PC-3 (cell line): ENCODE measurements at regions of chr1 and their contacts with region 1.

Region 1: DNA sequence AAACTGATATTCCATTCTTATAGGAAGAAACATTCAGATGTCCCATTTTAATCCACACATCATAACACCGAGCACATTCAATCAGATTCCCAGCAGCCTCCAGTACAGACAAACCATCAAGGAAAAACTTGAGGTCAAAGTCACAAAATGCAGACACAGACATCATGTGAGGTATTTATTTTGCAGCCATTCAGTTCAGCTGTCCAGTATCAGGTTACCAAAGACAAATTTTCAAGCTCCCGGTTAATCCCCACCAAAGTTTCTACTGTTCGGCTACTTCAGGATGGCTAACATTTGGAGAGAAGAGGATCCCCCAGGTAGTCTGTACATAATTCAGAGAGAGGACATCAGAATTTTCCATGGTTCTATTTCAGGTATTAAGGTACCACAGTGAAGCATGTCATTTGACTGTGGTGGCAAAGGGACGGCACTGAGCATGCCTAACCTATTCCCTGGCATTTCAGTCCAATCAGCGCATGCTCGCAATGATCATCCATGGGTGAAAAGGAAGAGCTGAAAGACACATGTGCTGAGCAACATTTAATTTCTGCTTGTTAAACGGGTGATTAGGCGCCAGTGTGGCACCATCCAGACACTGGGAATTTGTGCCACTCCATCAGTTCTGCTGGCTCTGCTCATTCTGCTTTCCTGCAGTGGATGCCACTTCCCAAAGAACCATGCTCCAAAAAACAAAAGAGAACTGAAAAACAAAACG is 13.6 kb upstream of the NDC1 start:
- DNase-seq: no peak
- ATAC-seq: no peak
- H3K4me3 ChIP-seq: no peak overlapping the region
- H3K27ac ChIP-seq: no peak overlapping the region
- H3K4me1 ChIP-seq: no peaks in the 10 kb centered on the region
- H3K27me3 ChIP-seq: no peaks in the 10 kb centered on the region
- CTCF ChIP-seq: no peak

Region 2: DNA sequence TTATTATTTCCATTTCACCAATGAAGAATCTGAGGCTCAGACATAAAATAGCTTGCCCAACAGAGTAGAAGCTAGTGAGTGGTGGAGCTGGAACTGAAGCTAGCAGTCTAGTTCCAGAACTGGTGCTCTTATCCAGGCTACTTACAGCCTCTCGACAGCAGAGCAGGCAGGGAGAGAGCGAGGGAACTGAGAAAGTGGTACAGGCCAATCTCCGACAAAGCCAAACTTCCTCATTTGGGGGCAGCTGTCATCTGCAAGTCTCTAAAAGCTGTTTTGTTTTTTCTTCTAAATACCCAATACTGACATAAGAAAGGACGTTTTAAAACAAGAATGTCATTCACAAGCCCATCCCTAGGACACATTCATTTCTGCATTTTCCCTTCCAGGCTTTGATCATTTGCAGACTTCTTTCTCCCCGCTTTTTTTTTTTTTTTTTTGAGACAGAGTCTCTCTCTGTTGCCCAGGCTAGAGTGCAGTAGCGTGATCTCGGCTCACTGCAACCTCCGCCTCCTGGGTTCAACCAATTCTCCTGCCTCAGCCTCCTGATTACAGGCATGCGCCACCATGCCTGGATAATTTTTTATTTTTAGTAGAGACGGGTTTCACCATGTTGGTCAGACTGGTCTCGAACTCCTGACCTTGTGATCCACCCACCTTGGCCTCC is 17.9 kb after region 1 on chr1:
- CTCF ChIA-PET with region 1: interaction called, 12 read pairs
- POLR2A ChIA-PET with region 1: interaction called, 5 read pairs
- intact Hi-C with region 1: no loop called
- DNase-seq: no peak
- ATAC-seq: no peak
- H3K4me3 ChIP-seq: no peak overlapping the region
- H3K27ac ChIP-seq: no peak overlapping the region
- H3K4me1 ChIP-seq: no peaks in the 10 kb centered on the region
- H3K27me3 ChIP-seq: no peaks in the 10 kb centered on the region
- CTCF ChIP-seq: no peak